Activated B cell treated with CpG ODN at 0.5 μM for 24 hours (primary cell): ENCODE measurements at regions of chr12 and their contacts with region 1.

Region 1: DNA sequence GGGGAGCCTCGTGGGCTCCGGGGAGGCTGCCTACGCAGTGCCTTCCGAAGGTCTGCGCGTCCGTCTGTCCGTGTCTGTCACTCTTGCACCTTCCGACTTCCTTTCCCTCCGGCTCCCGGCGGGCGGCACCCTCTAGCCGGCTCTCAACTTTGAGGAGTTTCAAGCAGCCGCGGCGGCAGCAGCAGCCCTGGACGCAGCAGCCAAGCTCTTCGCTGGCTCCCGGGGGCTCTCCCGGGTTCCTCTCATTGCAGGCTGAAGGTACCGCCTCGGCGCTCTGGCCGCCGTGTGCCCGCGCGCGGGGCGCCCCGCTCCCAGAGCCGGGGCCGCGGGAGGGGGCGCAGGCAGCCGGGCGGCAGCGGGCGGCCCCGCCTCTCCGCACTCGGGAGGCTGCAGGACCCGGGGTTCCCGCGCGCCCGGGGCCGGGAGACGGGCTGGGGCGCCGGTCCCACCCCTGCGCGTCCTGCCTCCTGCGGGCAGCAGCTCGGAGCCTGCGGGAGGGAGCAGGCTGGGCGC is at the starts of genes AMIGO2 and PCED1B:
- DNase-seq: no peak
- ATAC-seq: peak; percentile 47
- H3K4me3 Mint-ChIP-seq: peak within 1 kb of the TSS; percentile 99
- H3K27ac Mint-ChIP-seq: peak within 1 kb of the TSS; percentile 95
- H3K4me1 Mint-ChIP-seq: peaks cover 67% of the 10 kb centered on the region
- H3K27me3 Mint-ChIP-seq: no peaks in the 10 kb centered on the region
- CTCF ChIP-seq: no peak
- total RNA-seq, gene AMIGO2: 13.9 and 14.1 TPM in 2 replicates
- total RNA-seq, gene PCED1B: 60.9 and 65.4 TPM in 2 replicates

Region 2: DNA sequence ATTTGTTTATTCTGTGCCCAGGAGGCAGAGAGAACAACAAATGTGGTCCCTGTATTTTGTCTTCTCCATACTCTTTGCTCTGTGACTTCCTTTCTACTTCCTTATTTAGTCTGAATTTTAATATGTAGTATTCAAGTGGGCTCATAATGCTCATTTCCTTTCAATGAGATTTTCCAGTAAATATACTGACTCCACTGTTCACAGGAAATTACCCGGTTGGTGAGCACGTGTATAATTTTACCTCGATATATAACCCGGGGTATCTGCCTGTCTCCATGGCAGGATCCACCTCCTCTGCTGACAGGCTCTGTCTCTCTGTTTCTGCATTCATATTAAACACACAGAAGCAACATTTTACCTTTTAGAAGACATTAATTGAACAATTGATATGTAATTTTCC is 419.7 kb before region 1 on chr12:
- CTCF ChIA-PET with region 1: no interaction called
- POLR2A ChIA-PET with region 1: no interaction called
- intact Hi-C with region 1: no loop called
- DNase-seq: no peak
- ATAC-seq: no peak
- H3K4me3 Mint-ChIP-seq: no peak overlapping the region
- H3K27ac Mint-ChIP-seq: no peak overlapping the region
- H3K4me1 Mint-ChIP-seq: peaks cover 28% of the 10 kb centered on the region
- H3K27me3 Mint-ChIP-seq: no peaks in the 10 kb centered on the region
- CTCF ChIP-seq: no peak

Region 3: GRCh38 chr12:47207340-47207717 is 127.8 kb after region 1 on chr12:
- CTCF ChIA-PET with region 1: interaction called, 4 read pairs
- POLR2A ChIA-PET with region 1: interaction called, 26 read pairs
- intact Hi-C with region 1: loop called (anchors 1 kb)
- DNase-seq: peak; percentile 51
- ATAC-seq: peak; percentile 86
- H3K4me3 Mint-ChIP-seq: peak overlapping the region; percentile 68
- H3K27ac Mint-ChIP-seq: peak overlapping the region; percentile 95
- H3K4me1 Mint-ChIP-seq: peaks cover 83% of the 10 kb centered on the region
- H3K27me3 Mint-ChIP-seq: no peaks in the 10 kb centered on the region
- CTCF ChIP-seq: no peak

Region 4: DNA sequence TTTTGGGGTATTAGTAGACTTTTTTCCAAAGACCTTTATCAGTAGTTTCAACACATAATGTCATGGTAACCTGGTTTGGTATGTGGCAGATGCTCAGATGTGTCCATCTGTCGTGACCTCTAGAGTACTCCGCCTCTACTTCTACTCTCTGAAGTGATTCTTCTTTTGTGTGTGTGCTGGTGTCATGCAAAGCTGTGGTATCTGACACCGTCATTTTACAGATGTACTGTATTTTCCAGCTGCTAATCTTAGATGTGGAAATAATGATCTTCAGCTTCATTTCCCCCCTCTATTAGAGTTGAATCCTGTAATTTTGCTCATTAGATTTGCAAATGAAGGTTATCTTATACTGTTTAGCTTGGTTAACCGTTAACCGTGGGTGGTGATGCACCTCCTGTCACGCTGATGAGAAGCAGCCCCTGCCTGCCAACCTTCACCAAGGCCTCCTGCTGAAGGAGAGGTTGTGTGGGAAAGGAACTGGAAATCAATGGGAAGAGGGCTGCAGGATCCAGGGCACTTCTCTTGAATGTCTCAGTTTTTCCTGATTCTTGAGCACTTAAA is 222.7 kb after region 1 on chr12:
- CTCF ChIA-PET with region 1: interaction called, 22 read pairs
- POLR2A ChIA-PET with region 1: interaction called, 40 read pairs
- intact Hi-C with region 1: loop called (anchors 1 kb)
- DNase-seq: no peak
- ATAC-seq: peak; percentile 74
- H3K4me3 Mint-ChIP-seq: peak overlapping the region; percentile 38
- H3K27ac Mint-ChIP-seq: peak overlapping the region; percentile 59
- H3K4me1 Mint-ChIP-seq: peaks cover 59% of the 10 kb centered on the region
- H3K27me3 Mint-ChIP-seq: no peaks in the 10 kb centered on the region
- CTCF ChIP-seq: no peak

Region 5: GRCh38 chr12:47361389-47362021 is 282.0 kb after region 1 on chr12:
- CTCF ChIA-PET with region 1: interaction called, 11 read pairs
- POLR2A ChIA-PET with region 1: interaction called, 13 read pairs
- intact Hi-C with region 1: loop called (anchors 2 kb)
- DNase-seq: no peak
- ATAC-seq: peak; percentile 68
- H3K4me3 Mint-ChIP-seq: peak overlapping the region; percentile 74
- H3K27ac Mint-ChIP-seq: peak overlapping the region; percentile 94
- H3K4me1 Mint-ChIP-seq: peaks cover 63% of the 10 kb centered on the region
- H3K27me3 Mint-ChIP-seq: no peaks in the 10 kb centered on the region
- CTCF ChIP-seq: no peak